Endothelial cell of umbilical vein (primary cell): ENCODE measurements at regions of chr11 and their contacts with region 1.

Region 1: DNA sequence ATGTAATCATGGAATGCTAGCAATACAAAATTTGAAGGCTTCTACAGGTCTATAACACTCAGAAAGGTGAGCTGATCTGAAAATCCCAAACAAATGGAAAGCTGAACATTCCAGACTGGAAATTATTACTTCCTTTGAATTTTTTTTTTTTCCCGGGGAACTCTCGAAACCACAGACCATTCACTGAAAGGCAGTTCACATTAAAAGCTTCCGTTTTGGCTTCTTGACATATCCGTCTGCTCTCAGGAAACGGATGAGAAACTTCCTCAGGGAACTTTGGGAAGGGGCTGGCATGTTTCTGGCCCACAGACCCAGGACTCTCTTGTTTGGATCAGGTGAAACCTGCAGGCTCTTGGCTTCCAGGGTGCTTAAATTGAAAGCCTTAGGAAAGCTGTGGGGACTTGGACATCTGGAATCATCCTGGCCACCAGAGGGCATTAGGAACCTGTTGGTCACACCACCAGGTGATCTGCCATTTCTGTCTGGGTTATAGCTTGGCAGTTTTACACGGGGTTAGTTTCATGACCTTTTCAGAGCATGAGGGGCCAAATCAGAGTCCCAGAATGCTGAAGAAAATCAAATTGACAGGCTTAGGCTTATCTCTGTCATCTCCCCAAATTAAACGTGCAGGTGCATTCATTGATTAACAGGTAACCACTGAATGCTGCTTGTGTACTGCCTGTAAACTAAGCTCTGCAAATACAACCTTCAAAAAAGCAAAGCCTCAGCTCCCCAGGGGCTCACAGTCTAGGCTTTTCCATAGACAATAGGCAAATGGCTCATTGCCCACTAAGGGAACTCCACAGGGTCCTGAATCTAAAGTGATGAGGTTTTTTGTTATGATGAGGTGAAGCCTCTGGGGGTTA is 22.7 kb upstream of the GRAMD1B start:
- DNase-seq: peak; percentile 75
- H3K4me3 ChIP-seq: peak overlapping the region in 1 of 3 experiments; percentile 22
- H3K27ac ChIP-seq: no peak overlapping the region
- H3K4me1 ChIP-seq: peaks cover 22% of the 10 kb centered on the region
- H3K27me3 ChIP-seq: peaks cover 3 to 9% of the 10 kb centered on the region in 2 experiments
- CTCF ChIP-seq: peak; percentile 61 to 67
- POLR2A ChIP-seq: no peak

Region 2: DNA sequence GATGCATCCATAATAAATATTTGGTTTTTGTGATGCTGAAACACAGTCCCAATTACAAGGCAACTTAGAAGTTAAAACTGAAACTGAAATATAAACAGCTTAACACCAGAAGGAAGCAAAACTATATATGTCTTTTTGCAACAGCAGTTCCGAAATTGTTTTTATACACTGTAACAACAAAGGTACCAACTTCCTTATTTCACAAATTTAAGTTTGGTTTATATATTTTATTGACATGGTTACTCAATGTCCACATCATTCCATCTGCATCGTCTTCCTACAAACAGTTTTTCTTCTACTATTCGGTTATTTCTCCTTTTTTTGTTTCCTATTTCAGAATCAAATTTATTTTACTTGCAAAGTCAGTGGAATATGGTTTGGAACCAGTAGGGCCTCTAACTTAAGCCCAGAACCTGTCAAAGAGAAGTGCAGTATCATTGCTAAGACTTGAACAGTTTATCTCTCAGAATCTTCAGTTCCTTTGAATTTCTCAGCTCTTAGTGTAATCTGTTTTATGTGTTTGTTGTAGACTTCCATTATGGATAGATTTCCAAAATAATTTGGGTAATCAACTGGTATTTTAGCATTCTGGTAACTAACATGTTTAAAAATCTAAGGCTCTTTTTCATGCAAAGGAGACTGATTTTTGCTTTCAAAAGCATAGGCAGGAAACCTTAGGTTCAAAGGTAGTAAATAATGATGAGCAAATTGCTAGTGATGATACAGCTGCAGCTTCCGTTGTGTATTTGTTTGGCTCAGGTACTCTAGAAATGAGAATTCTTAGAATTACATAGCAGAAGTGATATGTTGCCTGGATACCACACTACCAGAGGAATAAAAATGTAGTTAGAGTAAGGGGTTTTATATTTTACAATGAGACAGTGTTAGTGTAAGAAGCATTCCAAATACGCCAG is 337.2 kb before region 1 on chr11:
- CTCF ChIA-PET with region 1: no interaction called
- POLR2A ChIA-PET with region 1: no interaction called
- dilution Hi-C with region 1: no loop called
- intact Hi-C with region 1: no loop called
- DNase-seq: no peak
- H3K4me3 ChIP-seq: no peak overlapping the region
- H3K27ac ChIP-seq: no peak overlapping the region
- H3K4me1 ChIP-seq: no peaks in the 10 kb centered on the region
- H3K27me3 ChIP-seq: no peaks in the 10 kb centered on the region
- CTCF ChIP-seq: no peak
- POLR2A ChIP-seq: no peak

Region 3: DNA sequence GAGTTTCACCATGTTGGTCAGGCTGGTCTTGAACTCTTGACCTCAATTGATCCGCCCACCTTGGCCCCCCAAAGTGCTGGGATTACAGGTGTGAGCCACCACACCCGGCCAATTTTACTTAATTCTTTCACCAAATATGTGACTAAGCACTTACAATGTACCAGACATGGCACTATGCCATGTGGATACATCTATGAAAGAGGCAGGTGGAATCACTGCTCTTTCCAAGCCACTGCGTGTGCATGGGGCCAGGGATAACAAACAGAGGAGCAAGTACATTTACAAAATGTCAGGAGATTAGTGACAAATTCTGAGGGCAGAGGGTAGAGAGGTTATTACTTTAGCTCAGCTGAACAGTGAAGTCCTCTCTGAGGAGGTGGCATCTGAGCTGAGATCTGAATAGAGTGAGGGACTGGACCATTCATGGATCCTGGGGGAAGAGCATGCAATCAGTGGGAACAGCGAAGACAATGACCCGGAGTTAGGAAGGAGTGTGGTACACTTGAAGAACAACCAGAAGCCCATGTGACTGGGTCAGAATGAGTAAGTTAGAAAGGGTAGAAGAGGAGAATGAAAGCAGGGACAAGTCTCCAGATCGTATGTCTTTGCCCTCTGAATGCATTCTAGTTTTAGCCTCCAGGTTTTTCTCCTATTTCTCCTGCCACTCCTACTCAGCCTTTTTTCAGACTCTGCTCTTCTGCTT is 15.6 kb before region 1 on chr11:
- CTCF ChIA-PET with region 1: interaction called, 17 read pairs
- POLR2A ChIA-PET with region 1: no interaction called
- dilution Hi-C with region 1: no loop called
- intact Hi-C with region 1: no loop called
- DNase-seq: no peak
- H3K4me3 ChIP-seq: no peak overlapping the region
- H3K27ac ChIP-seq: no peak overlapping the region
- H3K4me1 ChIP-seq: no peaks in the 10 kb centered on the region
- H3K27me3 ChIP-seq: peaks cover 0 to 15% of the 10 kb centered on the region in 2 experiments
- CTCF ChIP-seq: no peak
- POLR2A ChIP-seq: no peak

Region 4: DNA sequence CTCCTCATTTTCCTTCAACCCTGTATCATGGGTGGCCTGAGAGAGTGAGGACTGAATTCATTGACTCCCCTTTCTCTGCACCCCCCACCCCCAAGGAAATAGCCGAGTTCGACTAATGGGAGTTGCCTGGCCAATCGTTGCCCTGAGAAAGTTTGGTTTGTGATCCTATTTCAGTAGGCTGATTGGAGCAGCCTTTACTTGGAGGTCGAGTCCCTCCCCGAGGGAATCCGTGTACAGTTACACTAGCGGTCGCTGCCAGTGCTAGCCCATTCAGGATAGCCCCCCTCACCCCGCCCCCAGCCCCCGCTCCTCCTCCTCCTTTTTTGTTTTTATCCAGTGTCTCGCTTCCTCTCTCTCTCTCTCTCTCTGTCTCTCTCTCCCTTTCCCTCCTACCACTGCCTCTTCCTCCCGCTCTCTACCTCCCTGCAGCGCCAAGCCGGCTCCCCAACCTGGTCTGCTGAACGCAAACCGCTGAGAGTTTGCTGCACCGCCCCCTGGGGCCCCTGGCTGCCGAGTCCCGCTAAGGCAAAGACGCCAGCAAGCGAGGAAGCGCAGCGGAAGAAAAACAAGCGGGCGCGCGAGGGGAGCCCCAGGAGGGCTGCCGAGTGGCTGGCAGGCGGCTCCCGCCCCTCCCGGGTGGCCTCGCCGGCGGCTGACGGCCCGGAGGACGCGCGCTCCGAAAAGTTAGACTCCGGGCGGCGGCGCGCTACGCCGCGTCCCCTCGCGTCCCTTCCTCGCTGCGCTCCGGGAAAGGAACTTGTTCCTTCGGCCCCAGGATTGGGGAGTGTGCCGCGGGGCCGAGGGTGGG is 22.8 kb after region 1 on chr11 and contains the start of gene GRAMD1B:
- CTCF ChIA-PET with region 1: interaction called, 43 read pairs
- POLR2A ChIA-PET with region 1: no interaction called
- dilution Hi-C with region 1: no loop called
- intact Hi-C with region 1: loop called (anchors 1 kb)
- DNase-seq: peak; percentile 66
- H3K4me3 ChIP-seq: peak within 1 kb of the TSS; percentile 37 to 63 (median 61)
- H3K27ac ChIP-seq: peak within 1 kb of the TSS; percentile 3
- H3K4me1 ChIP-seq: peaks cover 11% of the 10 kb centered on the region
- H3K27me3 ChIP-seq: peaks cover 14% of the 10 kb centered on the region in 2 experiments
- CTCF ChIP-seq: peak in 1 of 2 donors; percentile 25
- POLR2A ChIP-seq: no peak
- total RNA-seq, gene GRAMD1B: 6.8 and 11.1 TPM in 2 replicates

Region 5: GRCh38 chr11:123454060-123454651 is 46.8 kb after region 1 on chr11:
- CTCF ChIA-PET with region 1: interaction called, 13 read pairs
- POLR2A ChIA-PET with region 1: no interaction called
- dilution Hi-C with region 1: no loop called
- intact Hi-C with region 1: no loop called
- DNase-seq: peak; percentile 26
- H3K4me3 ChIP-seq: no peak overlapping the region
- H3K27ac ChIP-seq: peak overlapping the region; percentile 9
- H3K4me1 ChIP-seq: peaks cover 15% of the 10 kb centered on the region
- H3K27me3 ChIP-seq: no peaks in the 10 kb centered on the region
- CTCF ChIP-seq: no peak
- POLR2A ChIP-seq: no peak

Region 6: DNA sequence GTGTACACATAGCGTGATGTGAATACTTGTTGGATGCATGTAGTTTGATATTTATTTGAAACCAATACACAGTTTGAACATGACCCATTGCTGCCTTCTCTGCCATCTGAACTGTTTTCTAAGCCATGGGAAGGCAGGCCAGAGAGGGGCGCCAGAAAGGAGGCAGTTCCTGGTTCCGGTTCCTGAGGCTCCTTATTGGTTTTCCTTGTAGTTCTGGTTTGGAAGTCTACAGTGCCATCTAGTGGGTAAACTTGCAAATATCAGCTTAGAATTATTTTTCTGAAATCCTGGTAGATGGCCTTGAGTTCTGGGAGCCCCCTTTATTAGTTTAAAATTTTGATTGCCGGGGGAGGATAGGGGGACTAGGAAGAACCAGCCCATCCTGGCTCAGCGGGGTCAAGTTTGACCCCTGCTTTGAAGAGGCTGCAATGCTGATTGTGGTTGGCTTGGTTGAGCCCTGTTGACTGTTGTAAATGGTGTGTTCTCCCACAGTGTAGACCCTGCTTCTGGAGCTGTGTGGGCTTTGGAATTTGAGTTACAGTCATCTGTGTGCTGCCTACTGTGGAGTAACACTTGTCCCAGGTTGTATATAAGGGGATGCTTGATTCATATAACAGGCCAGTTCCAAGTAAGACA is 71.1 kb after region 1 on chr11:
- CTCF ChIA-PET with region 1: interaction called, 368 read pairs
- POLR2A ChIA-PET with region 1: no interaction called
- dilution Hi-C with region 1: no loop called
- intact Hi-C with region 1: loop called (anchors 1 kb)
- DNase-seq: peak; percentile 76
- H3K4me3 ChIP-seq: no peak overlapping the region
- H3K27ac ChIP-seq: no peak overlapping the region
- H3K4me1 ChIP-seq: peaks cover 25% of the 10 kb centered on the region
- H3K27me3 ChIP-seq: no peaks in the 10 kb centered on the region
- CTCF ChIP-seq: peak; percentile 54 to 58
- POLR2A ChIP-seq: no peak

Region 7: GRCh38 chr11:123511037-123511870 is 103.9 kb after region 1 on chr11:
- CTCF ChIA-PET with region 1: interaction called, 14 read pairs
- POLR2A ChIA-PET with region 1: no interaction called
- dilution Hi-C with region 1: no loop called
- intact Hi-C with region 1: loop called (anchors 1 kb)
- DNase-seq: peak; percentile 83
- H3K4me3 ChIP-seq: no peak overlapping the region
- H3K27ac ChIP-seq: no peak overlapping the region
- H3K4me1 ChIP-seq: peaks cover 8% of the 10 kb centered on the region
- H3K27me3 ChIP-seq: no peaks in the 10 kb centered on the region
- CTCF ChIP-seq: peak; percentile 93 to 97
- POLR2A ChIP-seq: no peak

Region 8: GRCh38 chr11:123567466-123567865 is 160.1 kb after region 1 on chr11:
- CTCF ChIA-PET with region 1: no interaction called
- POLR2A ChIA-PET with region 1: no interaction called
- dilution Hi-C with region 1: no loop called
- intact Hi-C with region 1: no loop called
- DNase-seq: no peak
- H3K4me3 ChIP-seq: no peak overlapping the region
- H3K27ac ChIP-seq: no peak overlapping the region
- H3K4me1 ChIP-seq: no peaks in the 10 kb centered on the region
- H3K27me3 ChIP-seq: peaks cover 0 to 2% of the 10 kb centered on the region in 2 experiments
- CTCF ChIP-seq: no peak
- POLR2A ChIP-seq: no peak